ENCODE measurements at regions of chr12 and their contacts with region 1.

Region 1: GRCh38 chr12:121351820-121352681 is at the start of gene ANAPC5:
- DNase-seq: peak; percentile 94 to 99
- H3K4me3 ChIP-seq: peak within 1 kb of the TSS; percentile 93 to 97
- H3K27ac ChIP-seq: peak within 1 kb of the TSS; percentile 81 to 84
- H3K4me1 ChIP-seq: peaks cover 6 to 14% of the 10 kb centered on the region in 2 donors
- H3K27me3 ChIP-seq: no peaks in the 10 kb centered on the region
- CTCF ChIP-seq: peak in 1 of 3 experiments; percentile 12
- total RNA-seq, gene ANAPC5: 58.8 TPM

Region 2: DNA sequence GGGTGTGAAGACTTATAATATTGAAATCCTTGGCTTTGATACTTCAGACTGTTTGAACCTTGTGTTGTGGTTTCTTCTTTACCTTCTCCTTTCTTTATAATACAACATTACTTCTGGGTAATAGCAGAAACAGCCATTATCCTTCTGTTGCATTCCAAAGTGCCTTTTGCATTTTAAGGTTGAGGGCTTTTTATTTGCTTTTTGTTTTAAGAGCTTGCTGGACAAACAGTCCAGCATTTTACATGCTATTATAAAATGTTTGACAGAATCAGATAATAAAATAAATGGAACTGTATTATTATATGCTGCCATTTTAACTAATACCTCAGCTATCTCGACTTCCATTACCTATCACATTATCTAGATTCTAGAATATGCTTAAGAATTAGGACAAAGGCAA is 61.9 kb after region 1 on chr12:
- intact Hi-C with region 1: no loop called
- DNase-seq: no peak
- H3K4me3 ChIP-seq: no peak overlapping the region
- H3K27ac ChIP-seq: no peak overlapping the region
- H3K4me1 ChIP-seq: no peaks in the 10 kb centered on the region
- H3K27me3 ChIP-seq: no peaks in the 10 kb centered on the region
- CTCF ChIP-seq: no peak

Region 3: DNA sequence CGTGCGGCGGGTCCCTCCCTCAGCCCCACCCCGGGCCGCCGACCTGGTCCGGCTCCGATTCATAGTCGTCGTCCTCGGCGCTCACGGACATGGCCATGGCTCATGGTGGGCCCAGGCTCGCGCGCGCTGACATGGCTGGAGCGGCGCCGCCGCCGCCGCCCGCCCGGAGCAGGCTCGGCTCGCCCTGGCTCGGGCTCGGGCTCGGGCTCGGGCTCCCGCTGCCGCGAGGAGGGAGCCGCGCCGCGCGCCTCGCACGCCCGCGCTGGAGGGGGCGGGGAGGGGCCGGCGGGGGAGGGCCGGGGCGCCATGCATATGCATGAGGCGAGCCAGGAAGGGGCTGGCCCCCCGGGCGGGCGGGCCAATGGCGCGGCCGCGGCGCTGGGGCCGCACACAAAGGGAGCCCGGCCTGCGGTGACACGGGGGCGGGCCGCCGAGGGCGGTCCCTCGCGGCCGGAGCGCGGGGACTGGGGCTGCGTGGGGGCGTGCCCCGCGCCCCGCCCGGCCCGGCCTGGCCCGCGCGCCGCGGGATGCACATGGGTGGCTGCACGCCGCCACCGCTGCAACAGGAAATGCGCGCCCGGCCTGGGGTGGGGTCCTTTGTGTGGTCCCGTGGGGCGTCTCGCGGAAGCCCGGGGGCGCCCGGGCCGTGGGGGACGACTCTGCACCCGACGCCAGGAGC is 115.2 kb after region 1 on chr12:
- intact Hi-C with region 1: loop called (anchors 2 kb)
- DNase-seq: peak; percentile 73 to 94
- H3K4me3 ChIP-seq: peak overlapping the region; percentile 84 to 97
- H3K27ac ChIP-seq: peak overlapping the region; percentile 69 to 92
- H3K4me1 ChIP-seq: peaks cover 0 to 5% of the 10 kb centered on the region in 2 donors
- H3K27me3 ChIP-seq: no peaks in the 10 kb centered on the region
- CTCF ChIP-seq: no peak